Heart left ventricle (tissue), 16 donors: ENCODE measurements at regions of chr14 and their contacts with region 1.

Region 1: DNA sequence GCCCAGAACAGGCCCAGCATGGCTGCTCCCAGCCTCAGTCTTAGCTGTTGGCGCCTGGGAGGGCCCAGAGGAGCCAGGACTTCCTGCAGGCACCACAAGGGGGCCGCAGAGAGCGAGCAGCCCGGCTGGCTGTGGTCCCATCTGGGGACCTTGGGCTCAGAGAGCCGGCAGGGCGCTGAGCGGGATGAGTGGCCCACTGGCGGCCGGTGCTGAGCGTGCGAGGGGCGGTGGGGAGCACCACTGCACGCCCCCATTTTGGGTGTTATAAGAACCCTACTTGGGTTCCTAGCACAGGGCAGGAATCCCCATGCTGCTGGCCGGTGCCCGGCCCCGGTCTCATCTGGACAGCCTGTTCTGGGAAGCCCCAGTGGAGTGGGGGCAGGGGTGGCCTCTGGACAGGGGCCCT is 25.9 kb upstream of the CRIP2 start:
- DNase-seq: peak; percentile 76 to 89 (median 80)
- ATAC-seq: peak; percentile 77 to 93 (median 87)
- H3K4me3 ChIP-seq: peak overlapping the region in 2 of 12 donors; percentile 4 to 16
- H3K27ac ChIP-seq: peak overlapping the region in 9 of 12 donors; percentile 4 to 59 (median 32)
- H3K4me1 ChIP-seq: peaks cover 0 to 28% (median 14%) of the 10 kb centered on the region in 12 donors
- H3K27me3 ChIP-seq: no peaks in the 10 kb centered on the region
- CTCF ChIP-seq: peak; percentile 92 to 99 (median 98)
- POLR2A ChIP-seq: peak in 1 of 2 donors; percentile 11

Region 2: DNA sequence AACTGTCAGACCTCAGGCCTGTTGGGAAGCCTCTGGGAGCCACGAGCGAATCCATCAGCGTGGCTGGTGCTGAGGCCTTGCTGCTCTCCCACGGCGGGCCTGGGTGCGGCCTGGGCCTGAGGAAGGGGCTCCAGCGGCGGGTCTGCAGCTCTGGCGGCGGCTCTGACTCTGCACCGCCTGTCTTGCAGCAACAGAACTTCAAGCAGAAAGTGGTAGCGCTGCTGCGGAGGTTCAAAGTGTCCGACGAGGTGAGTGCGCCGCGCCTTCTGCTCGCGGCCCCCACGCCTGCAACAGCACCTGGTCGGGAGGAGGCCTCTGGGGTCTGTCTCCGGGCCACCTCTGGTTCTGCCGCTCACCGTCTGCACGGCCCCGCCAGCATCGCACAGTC is 79.1 kb before region 1 on chr14:
- intact Hi-C with region 1: loop called in 8 of 10 experiments (anchors 2 to 10 kb)
- DNase-seq: no peak
- ATAC-seq: no peak
- H3K4me3 ChIP-seq: no peak overlapping the region
- H3K27ac ChIP-seq: no peak overlapping the region
- H3K4me1 ChIP-seq: peaks cover 0 to 6% (median 0%) of the 10 kb centered on the region in 12 donors
- H3K27me3 ChIP-seq: no peaks in the 10 kb centered on the region
- CTCF ChIP-seq: no peak
- POLR2A ChIP-seq: no peak

Region 3: DNA sequence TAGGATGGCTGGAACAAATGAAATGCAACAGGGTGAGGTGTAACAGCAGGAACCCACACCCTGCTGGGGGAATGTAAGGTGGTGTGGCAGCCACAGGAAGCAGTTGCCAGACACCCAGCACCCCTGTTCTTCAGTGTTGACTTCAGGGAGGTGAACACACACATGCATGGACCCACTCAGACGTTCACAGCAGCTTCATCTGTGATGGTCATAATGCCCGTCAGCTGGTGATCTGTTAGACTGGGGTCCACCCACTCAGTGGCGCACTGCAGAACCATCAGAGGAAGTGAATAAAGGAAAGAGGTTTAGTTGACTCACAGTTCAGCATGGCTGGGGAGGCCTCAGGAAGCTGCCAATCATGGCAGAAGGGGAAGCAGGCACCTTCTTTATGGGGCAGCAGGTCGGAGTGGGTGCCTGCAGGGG is 73.1 kb before region 1 on chr14:
- intact Hi-C with region 1: loop called in 8 of 10 experiments (anchors 2 to 10 kb)
- DNase-seq: no peak
- ATAC-seq: no peak
- H3K4me3 ChIP-seq: no peak overlapping the region
- H3K27ac ChIP-seq: no peak overlapping the region
- H3K4me1 ChIP-seq: peaks cover 0 to 6% (median 0%) of the 10 kb centered on the region in 12 donors
- H3K27me3 ChIP-seq: no peaks in the 10 kb centered on the region
- CTCF ChIP-seq: no peak
- POLR2A ChIP-seq: no peak

Region 4: GRCh38 chr14:105480952-105481801 is 32.5 kb after region 1 on chr14:
- intact Hi-C with region 1: loop called in 6 of 10 experiments (anchors 1 to 5 kb)
- DNase-seq: peak; percentile 91 to 95 (median 92)
- ATAC-seq: peak; percentile 59 to 76 (median 68)
- H3K4me3 ChIP-seq: peak overlapping the region; percentile 0 to 56 (median 42)
- H3K27ac ChIP-seq: peak overlapping the region; percentile 94 to 100 (median 97)
- H3K4me1 ChIP-seq: peaks cover 25 to 97% (median 87%) of the 10 kb centered on the region in 12 donors
- H3K27me3 ChIP-seq: peaks cover 0 to 12% (median 0%) of the 10 kb centered on the region in 9 donors
- CTCF ChIP-seq: peak; percentile 98 to 100 (median 99)
- POLR2A ChIP-seq: no peak

Region 5: DNA sequence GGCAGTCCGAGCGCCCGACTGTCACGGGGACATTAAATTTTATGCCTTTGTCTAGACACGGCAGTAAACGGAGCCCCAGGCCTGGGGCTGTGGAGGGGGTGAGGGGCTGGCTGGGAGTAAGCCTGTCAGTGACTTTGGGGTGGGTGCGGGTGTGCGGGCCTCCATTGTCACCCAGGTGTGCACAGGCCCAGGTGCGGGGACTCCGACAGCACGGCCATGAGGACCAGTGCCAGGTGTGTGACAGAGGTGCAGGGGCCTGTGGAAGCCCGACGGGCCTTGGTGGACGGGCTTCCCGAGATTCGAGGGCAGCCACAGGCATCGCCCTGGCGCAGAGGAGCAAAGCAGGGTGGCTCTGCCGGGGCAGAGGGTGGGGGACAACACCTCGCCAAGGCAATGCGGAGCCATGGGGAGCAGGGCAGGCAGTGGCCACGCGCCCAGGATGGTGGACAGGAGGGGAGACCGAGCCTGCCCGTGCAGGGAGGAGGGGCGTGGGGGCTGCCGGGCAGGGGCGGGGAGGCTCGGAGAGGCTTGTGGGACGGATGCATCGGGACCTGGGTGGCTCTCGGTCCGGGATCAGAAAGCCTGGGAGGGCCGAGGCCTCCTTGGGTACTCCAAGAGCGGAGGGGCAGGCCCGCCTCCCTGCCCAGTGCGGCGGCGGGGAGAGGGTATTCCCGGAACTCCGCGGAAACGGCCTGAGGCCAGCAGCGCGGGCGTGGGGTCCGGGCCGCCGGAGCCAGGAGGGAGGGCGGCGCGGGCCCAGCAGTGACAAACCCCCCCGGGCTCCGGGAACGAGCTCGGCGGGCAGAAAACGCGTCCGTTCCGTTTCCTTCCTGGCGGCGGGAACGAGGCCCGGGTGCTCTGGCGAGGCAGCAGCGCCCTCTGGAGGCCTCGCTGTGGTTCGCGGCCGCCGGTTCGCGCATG is 79.2 kb after region 1 on chr14:
- intact Hi-C with region 1: loop called in 4 of 10 experiments (anchors 2 to 10 kb)
- DNase-seq: peak; percentile 74 to 91 (median 85)
- ATAC-seq: peak; percentile 59 to 83 (median 70)
- H3K4me3 ChIP-seq: peak overlapping the region; percentile 45 to 77 (median 70)
- H3K27ac ChIP-seq: peak overlapping the region in 11 of 12 donors; percentile 24 to 78 (median 67)
- H3K4me1 ChIP-seq: peaks cover 11 to 41% (median 27%) of the 10 kb centered on the region in 12 donors
- H3K27me3 ChIP-seq: peaks cover 0 to 28% (median 0%) of the 10 kb centered on the region in 9 donors
- CTCF ChIP-seq: peak; percentile 71 to 96 (median 90)
- POLR2A ChIP-seq: peak in 1 of 2 donors; percentile 40